CD14-positive monocyte (primary cell): ENCODE measurements at regions of chr22 and their contacts with region 1.

Region 1: GRCh38 chr22:36913427-36914389 is at the start of gene CSF2RB:
- DNase-seq: peak; percentile 85 to 96 (median 92)
- H3K4me3 ChIP-seq: peak within 1 kb of the TSS; percentile 53 to 84 (median 63)
- H3K4me3 Mint-ChIP-seq: peak within 1 kb of the TSS; percentile 87 to 97
- H3K27ac ChIP-seq: peak within 1 kb of the TSS; percentile 86 to 96
- H3K27ac Mint-ChIP-seq: peak within 1 kb of the TSS; percentile 92 to 99 (median 97)
- H3K4me1 ChIP-seq: peaks cover 31 to 62% of the 10 kb centered on the region in 2 donors
- H3K4me1 Mint-ChIP-seq: peaks cover 58% of the 10 kb centered on the region
- H3K27me3 ChIP-seq: no peaks in the 10 kb centered on the region
- H3K27me3 Mint-ChIP-seq: peaks cover 0 to 5% (median 0%) of the 10 kb centered on the region in 3 donors
- CTCF ChIP-seq: no peak
- polyA plus RNA-seq, gene CSF2RB: 29.9 to 91.1 (median 52.7) TPM

Region 2: GRCh38 chr22:36839356-36840073 is 74.2 kb before region 1 on chr22:
- intact Hi-C with region 1: no loop called
- DNase-seq: peak in 1 of 3 donors; percentile 37
- H3K4me3 ChIP-seq: no peak overlapping the region
- H3K4me3 Mint-ChIP-seq: peak overlapping the region in 1 of 2 donors; percentile 90
- H3K27ac ChIP-seq: no peak overlapping the region
- H3K27ac Mint-ChIP-seq: peak overlapping the region in 1 of 7 donors; percentile 39
- H3K4me1 ChIP-seq: no peaks in the 10 kb centered on the region
- H3K4me1 Mint-ChIP-seq: peaks cover 2% of the 10 kb centered on the region
- H3K27me3 ChIP-seq: peaks cover 57 to 90% of the 10 kb centered on the region in 2 donors
- H3K27me3 Mint-ChIP-seq: peaks cover 73 to 86% (median 80%) of the 10 kb centered on the region in 3 donors
- CTCF ChIP-seq: no peak

Region 3: GRCh38 chr22:36873680-36874537 is 39.8 kb before region 1 on chr22:
- intact Hi-C with region 1: loop called in 1 of 2 experiments (anchors 5 kb)
- DNase-seq: peak; percentile 59 to 83 (median 74)
- H3K4me3 ChIP-seq: peak overlapping the region in 1 of 3 experiments; percentile 24
- H3K4me3 Mint-ChIP-seq: peak overlapping the region; percentile 56 to 70
- H3K27ac ChIP-seq: peak overlapping the region; percentile 59 to 81
- H3K27ac Mint-ChIP-seq: peak overlapping the region; percentile 86 to 95 (median 89)
- H3K4me1 ChIP-seq: peaks cover 31 to 35% of the 10 kb centered on the region in 2 donors
- H3K4me1 Mint-ChIP-seq: peaks cover 43% of the 10 kb centered on the region
- H3K27me3 ChIP-seq: no peaks in the 10 kb centered on the region
- H3K27me3 Mint-ChIP-seq: peaks cover 0 to 3% (median 0%) of the 10 kb centered on the region in 3 donors
- CTCF ChIP-seq: peak; percentile 53